ENCODE measurements at regions of chr6 and their contacts with region 1.

Region 1: GRCh38 chr6:24855395-24856245 is 56.9 kb upstream of the ARMH2 start:
- DNase-seq: peak in 40 of 42 donors; percentile 28 to 85 (median 66)

Region 2: DNA sequence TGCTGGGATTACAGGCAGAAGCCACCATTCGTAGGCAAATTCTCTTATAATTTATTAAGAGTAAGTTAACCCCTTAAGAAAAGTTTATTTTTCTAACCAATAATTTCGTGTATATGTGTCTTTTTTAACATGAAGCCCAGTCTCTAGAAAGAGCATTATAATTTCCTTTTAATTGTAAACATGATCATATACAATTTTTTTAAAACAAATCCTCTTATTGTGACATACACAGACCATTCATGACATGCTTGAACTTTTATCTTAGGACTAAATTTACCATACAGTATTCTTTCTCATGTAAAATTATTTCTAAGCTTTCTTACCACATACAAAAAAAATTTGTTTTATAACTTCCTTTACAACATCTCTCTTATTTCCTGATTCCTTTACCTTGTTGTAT is 182.0 kb before region 1 on chr6:
- intact Hi-C with region 1: no loop called
- DNase-seq: no peak

Region 3: DNA sequence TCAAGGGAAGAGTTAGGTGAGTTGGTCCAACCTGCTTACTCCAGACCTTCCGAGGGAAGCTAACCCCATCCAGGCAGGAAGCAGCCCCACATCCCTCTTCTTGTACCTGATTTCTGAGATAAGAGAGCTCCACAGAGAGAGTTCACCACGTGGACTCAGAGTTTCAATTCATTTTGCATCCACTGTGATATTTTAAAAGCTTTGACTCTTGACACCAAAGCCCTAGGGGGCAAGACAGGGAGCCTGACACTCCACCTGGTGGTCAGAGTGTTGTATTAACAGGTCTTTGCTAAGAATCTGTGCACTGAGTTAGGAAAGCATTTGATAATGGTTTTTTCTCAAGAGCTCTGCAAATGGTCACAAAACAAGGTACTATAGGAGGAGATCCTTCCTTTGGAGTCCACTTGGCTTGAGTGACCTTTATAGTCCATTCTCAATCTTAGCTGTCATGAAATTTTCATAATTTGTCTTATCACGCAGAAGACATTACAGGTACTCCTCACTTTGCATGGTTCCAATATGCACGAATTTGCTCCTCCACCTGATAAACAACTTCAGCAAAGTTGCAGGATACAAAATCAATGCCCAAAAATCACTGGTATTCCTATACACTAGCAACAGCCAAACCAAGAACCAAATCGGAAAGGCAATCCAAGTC is 136.3 kb after region 1 on chr6:
- intact Hi-C with region 1: loop called (anchors 10 kb)
- DNase-seq: peak in 35 of 42 donors; percentile 12 to 78 (median 43)

Region 4: GRCh38 chr6:25061289-25061936 is 205.8 kb after region 1 on chr6:
- intact Hi-C with region 1: loop called (anchors 5 kb)
- DNase-seq: no peak